OCI-LY7 (cell line): ENCODE measurements at regions of chr10 and their contacts with region 1.

Region 1: GRCh38 chr10:112471878-112472487 is 25.0 kb downstream of the VTI1A start:
- DNase-seq: peak; percentile 62
- H3K4me3 ChIP-seq: no peak overlapping the region
- H3K27ac ChIP-seq: no peak overlapping the region
- H3K4me1 ChIP-seq: no peaks in the 10 kb centered on the region
- CTCF ChIP-seq: peak; percentile 89

Region 2: GRCh38 chr10:112314822-112315474 is 157.0 kb before region 1 on chr10:
- CTCF ChIA-PET with region 1: no interaction called
- POLR2A ChIA-PET with region 1: no interaction called
- intact Hi-C with region 1: loop called (anchors 2 kb)
- DNase-seq: peak; percentile 73
- H3K4me3 ChIP-seq: no peak overlapping the region
- H3K27ac ChIP-seq: no peak overlapping the region
- H3K4me1 ChIP-seq: no peaks in the 10 kb centered on the region
- CTCF ChIP-seq: peak; percentile 97

Region 3: DNA sequence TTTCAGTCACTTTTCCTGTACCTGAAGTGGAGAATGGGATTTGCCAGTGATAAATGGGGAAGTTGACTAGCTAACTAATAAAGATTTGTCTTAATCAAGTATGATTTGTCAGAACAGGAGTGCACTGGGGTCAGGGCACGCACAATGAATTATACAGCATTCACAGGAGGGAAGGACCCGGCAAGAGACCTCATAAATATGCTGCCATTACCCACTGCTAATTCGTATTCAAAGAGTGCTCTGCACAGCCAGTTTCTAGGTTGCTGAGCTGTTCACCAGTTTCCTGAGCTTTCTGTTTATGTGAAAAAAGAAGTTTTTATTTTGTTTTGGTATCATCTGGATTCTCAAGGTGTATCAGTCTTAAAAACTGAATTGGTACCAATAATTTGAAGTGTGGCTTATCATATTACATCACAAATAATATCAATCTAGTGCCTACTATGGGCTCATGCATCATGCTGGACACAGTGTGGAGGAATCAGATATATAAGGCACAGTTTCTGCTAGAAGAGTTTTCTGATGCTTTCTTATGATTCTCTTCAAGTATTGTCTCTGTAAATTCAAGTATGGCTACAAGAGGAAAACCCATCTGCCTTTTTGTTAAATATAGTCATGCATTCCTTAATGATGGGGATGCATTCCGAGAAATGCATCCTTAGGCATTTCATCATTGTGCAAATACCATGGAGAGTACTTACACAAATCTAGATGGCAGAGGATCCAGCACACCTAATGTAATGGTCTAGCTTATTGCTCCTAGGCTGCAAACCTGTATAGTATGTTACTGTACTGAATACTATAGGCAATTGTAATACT is 177.2 kb after region 1 on chr10:
- CTCF ChIA-PET with region 1: no interaction called
- POLR2A ChIA-PET with region 1: no interaction called
- intact Hi-C with region 1: no loop called
- DNase-seq: no peak
- H3K4me3 ChIP-seq: no peak overlapping the region
- H3K27ac ChIP-seq: no peak overlapping the region
- H3K4me1 ChIP-seq: no peaks in the 10 kb centered on the region
- CTCF ChIP-seq: no peak

Region 4: GRCh38 chr10:113385021-113385999 is 913.3 kb after region 1 on chr10:
- CTCF ChIA-PET with region 1: no interaction called
- POLR2A ChIA-PET with region 1: no interaction called
- intact Hi-C with region 1: loop called (anchors 2 kb)
- DNase-seq: peak; percentile 56
- H3K4me3 ChIP-seq: no peak overlapping the region
- H3K27ac ChIP-seq: no peak overlapping the region
- H3K4me1 ChIP-seq: peaks cover 6% of the 10 kb centered on the region
- CTCF ChIP-seq: peak; percentile 77

Region 5: DNA sequence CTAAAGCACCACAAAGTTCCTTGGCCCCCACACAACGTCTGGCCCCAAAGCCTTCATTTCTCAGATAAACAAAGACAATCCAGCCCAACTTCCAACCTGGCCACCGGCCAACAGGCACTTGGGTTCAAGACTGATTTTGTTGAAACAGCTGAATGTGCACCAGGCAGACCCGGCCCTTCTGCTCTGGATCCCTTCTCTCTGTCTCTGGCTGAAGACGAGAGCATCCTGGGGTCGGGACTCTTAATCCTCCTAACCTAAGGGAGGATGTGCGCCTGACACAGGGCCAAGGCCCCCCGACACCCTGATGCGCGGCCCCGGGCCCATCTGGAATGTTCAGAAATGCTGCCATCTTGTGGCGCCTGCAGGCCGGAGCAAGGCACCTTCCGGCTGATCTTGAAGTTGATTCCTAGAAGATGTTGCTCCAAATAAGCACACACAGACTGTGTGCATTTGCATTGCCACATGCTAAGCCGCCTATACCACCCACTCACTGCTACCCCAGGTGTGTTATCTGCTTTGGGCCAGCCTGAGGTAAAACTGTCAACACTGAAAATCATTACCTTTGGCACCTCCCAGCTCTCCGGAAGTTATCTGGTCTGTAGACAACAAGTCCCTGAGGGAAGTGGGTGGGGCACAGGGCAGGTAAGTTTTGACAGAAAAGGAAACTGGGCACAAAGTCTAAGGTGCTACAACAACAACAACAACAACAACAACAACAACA is 982.5 kb after region 1 on chr10:
- CTCF ChIA-PET with region 1: no interaction called
- POLR2A ChIA-PET with region 1: no interaction called
- intact Hi-C with region 1: loop called (anchors 10 kb)
- DNase-seq: peak; percentile 40
- H3K4me3 ChIP-seq: no peak overlapping the region
- H3K27ac ChIP-seq: no peak overlapping the region
- H3K4me1 ChIP-seq: no peaks in the 10 kb centered on the region
- CTCF ChIP-seq: peak; percentile 81

Region 6: GRCh38 chr10:113521123-113521795 is 1049.3 kb after region 1 on chr10:
- CTCF ChIA-PET with region 1: interaction called, 3 read pairs
- POLR2A ChIA-PET with region 1: no interaction called
- intact Hi-C with region 1: loop called (anchors 5 kb)
- DNase-seq: peak; percentile 47
- H3K4me3 ChIP-seq: no peak overlapping the region
- H3K27ac ChIP-seq: no peak overlapping the region
- H3K4me1 ChIP-seq: no peaks in the 10 kb centered on the region
- CTCF ChIP-seq: peak; percentile 91

Region 7: DNA sequence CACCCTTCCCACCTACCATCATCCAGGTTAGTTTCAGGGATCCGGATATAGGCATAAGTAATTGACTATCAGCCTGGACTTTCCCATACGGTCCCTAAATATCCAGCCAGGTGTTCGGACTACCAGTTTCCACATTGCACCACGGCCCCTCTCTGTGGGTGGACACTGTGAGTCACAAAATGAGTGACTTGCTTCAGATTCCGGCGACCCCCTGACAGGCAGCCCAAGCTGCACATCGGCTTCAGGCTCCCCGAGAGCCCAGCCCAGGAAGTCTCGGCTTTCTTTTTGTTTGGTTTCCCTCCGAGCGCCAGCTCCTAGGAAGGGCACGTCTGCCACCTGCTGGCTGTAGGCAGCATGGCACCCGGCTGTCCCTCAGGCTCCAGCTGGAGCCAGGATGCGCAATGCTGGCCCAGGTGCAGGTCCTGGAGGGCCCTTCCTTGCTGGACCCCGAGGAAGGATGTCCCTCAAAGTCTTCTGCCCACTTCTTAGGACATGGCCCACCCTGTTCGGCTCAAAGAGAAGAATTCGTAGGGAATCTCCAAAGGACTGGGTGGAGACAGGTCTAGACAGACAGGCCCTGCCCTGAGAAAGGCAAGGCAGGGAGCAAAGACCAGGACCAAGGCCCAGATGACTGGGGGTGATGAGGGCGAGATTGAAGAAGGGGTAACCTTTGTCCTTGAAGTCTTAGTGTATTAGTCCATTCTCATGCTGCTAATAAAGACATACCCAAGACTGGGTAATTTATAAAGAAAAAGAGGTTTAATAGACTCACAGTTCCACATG is 1091.5 kb after region 1 on chr10:
- CTCF ChIA-PET with region 1: no interaction called
- POLR2A ChIA-PET with region 1: no interaction called
- intact Hi-C with region 1: loop called (anchors 5 kb)
- DNase-seq: peak; percentile 71
- H3K4me3 ChIP-seq: no peak overlapping the region
- H3K27ac ChIP-seq: no peak overlapping the region
- H3K4me1 ChIP-seq: no peaks in the 10 kb centered on the region
- CTCF ChIP-seq: peak; percentile 92